ENCODE measurements at regions of chr4 and their contacts with region 1.

Region 1: GRCh38 chr4:184384056-184384809 is 90.1 kb downstream of the IRF2 start:
- DNase-seq: no peak

Region 2: GRCh38 chr4:184282251-184282713 is 102.0 kb before region 1 on chr4:
- intact Hi-C with region 1: loop called (anchors 10 kb)
- DNase-seq: no peak

Region 3: DNA sequence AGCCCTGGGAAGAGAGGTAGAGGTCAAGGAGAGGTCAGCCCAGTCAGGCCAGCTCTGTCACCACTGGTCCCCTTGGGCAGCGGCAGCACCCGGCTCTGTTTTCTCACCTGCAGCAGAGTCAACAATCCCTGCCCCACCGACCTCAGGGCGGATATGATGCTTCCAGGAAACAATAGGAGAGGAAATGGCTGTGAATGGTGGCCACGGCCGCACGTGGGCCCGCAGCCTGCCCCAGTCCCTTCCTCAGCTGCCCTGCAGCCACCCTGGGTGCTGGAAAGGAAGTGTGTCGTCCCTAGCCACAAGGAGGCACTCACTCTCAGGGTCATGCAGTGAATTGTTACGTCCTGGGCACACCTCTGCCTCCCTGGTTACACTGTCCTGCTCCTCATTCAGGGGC is 74.1 kb before region 1 on chr4:
- intact Hi-C with region 1: no loop called
- DNase-seq: peak; percentile 82

Region 4: GRCh38 chr4:184343502-184344177 is 40.6 kb before region 1 on chr4:
- intact Hi-C with region 1: loop called (anchors 2 kb)
- DNase-seq: peak; percentile 90

Measured in cardiac septum (tissue), 1 donor.